Esophagus muscularis mucosa (tissue), 4 donors: ENCODE measurements at regions of chr10 and their contacts with region 1.

Region 1: GRCh38 chr10:75235375-75236177 is at the start of gene COMTD1:
- DNase-seq: peak; percentile 96
- H3K4me3 ChIP-seq: peak within 1 kb of the TSS; percentile 83 to 98 (median 89)
- H3K27ac ChIP-seq: peak within 1 kb of the TSS; percentile 83 to 93 (median 89)
- H3K4me1 ChIP-seq: peaks cover 8 to 35% (median 28%) of the 10 kb centered on the region in 4 donors
- H3K27me3 ChIP-seq: no peaks in the 10 kb centered on the region
- CTCF ChIP-seq: peak in 2 of 3 experiments; percentile 100
- EP300 ChIP-seq: no peak
- POLR2A ChIP-seq: no peak
- total RNA-seq, gene COMTD1: 23.7 to 44.5 (median 28.1) TPM

Region 2: GRCh38 chr10:74244097-74244685 is 991.4 kb before region 1 on chr10:
- intact Hi-C with region 1: loop called (anchors 5 kb)
- DNase-seq: no peak
- H3K4me3 ChIP-seq: no peak overlapping the region
- H3K27ac ChIP-seq: no peak overlapping the region
- H3K4me1 ChIP-seq: no peaks in the 10 kb centered on the region
- H3K27me3 ChIP-seq: no peaks in the 10 kb centered on the region
- CTCF ChIP-seq: peak; percentile 54 to 63 (median 57)
- EP300 ChIP-seq: no peak
- POLR2A ChIP-seq: no peak

Region 3: DNA sequence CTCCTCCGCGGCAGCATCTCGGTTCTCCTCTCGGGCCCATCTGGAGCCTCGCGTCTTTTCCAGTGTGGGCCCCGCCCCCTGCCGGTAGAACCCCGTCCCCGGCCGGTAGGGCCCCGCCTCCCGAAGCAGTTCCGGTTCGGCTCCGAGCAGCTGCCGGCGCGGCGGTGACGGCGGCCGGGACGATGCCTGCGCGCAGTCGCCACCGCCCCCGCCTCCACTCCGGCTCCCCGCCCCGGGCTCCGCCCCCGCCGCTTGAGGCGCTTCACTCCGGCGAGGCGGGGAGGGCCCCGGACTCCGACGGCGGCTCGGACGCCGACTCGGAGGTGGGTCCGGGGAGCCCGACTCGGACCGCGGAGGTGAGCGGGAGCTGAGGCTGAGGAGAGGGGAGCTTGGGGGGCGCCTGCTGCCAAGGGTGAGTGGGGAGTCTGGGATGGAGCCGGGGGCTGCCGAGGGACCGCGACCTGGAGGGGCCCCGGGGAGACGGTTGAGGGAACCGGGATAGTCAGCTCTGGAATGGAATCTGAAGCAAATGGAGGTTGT is 124.1 kb before region 1 on chr10 and contains the start of gene SAMD8:
- intact Hi-C with region 1: loop called (anchors 5 kb)
- DNase-seq: peak; percentile 99
- H3K4me3 ChIP-seq: peak within 1 kb of the TSS; percentile 82 to 95 (median 86)
- H3K27ac ChIP-seq: peak within 1 kb of the TSS; percentile 91 to 98 (median 98)
- H3K4me1 ChIP-seq: peaks cover 40 to 49% (median 42%) of the 10 kb centered on the region in 4 donors
- H3K27me3 ChIP-seq: no peaks in the 10 kb centered on the region
- CTCF ChIP-seq: peak; percentile 45 to 55 (median 55)
- EP300 ChIP-seq: no peak
- POLR2A ChIP-seq: peak; percentile 96
- total RNA-seq, gene SAMD8: 19.0 to 28.0 (median 27.5) TPM

Region 4: GRCh38 chr10:75187961-75188426 is 47.6 kb before region 1 on chr10:
- intact Hi-C with region 1: loop called (anchors 2 kb)
- DNase-seq: no peak
- H3K4me3 ChIP-seq: no peak overlapping the region
- H3K27ac ChIP-seq: peak overlapping the region in 1 of 4 donors; percentile 32
- H3K4me1 ChIP-seq: peaks cover 10 to 31% (median 23%) of the 10 kb centered on the region in 4 donors
- H3K27me3 ChIP-seq: no peaks in the 10 kb centered on the region
- CTCF ChIP-seq: peak; percentile 68 to 81 (median 77)
- EP300 ChIP-seq: no peak
- POLR2A ChIP-seq: no peak